Gastrocnemius medialis (tissue), 4 donors: ENCODE measurements at regions of chr11 and their contacts with region 1.

Region 1: GRCh38 chr11:57761301-57762234 is at the start of gene CTNND1:
- DNase-seq: peak; percentile 92 to 95
- ATAC-seq: peak; percentile 100
- H3K4me3 ChIP-seq: peak within 1 kb of the TSS; percentile 66 to 83 (median 78)
- H3K27ac ChIP-seq: peak within 1 kb of the TSS; percentile 90 to 97 (median 93)
- H3K4me1 ChIP-seq: peaks cover 34 to 37% of the 10 kb centered on the region in 2 donors
- H3K27me3 ChIP-seq: no peaks in the 10 kb centered on the region
- CTCF ChIP-seq: no peak
- POLR2A ChIP-seq: peak; percentile 67 to 80
- total RNA-seq, gene CTNND1: 19.7 to 29.8 (median 24.5) TPM

Region 2: DNA sequence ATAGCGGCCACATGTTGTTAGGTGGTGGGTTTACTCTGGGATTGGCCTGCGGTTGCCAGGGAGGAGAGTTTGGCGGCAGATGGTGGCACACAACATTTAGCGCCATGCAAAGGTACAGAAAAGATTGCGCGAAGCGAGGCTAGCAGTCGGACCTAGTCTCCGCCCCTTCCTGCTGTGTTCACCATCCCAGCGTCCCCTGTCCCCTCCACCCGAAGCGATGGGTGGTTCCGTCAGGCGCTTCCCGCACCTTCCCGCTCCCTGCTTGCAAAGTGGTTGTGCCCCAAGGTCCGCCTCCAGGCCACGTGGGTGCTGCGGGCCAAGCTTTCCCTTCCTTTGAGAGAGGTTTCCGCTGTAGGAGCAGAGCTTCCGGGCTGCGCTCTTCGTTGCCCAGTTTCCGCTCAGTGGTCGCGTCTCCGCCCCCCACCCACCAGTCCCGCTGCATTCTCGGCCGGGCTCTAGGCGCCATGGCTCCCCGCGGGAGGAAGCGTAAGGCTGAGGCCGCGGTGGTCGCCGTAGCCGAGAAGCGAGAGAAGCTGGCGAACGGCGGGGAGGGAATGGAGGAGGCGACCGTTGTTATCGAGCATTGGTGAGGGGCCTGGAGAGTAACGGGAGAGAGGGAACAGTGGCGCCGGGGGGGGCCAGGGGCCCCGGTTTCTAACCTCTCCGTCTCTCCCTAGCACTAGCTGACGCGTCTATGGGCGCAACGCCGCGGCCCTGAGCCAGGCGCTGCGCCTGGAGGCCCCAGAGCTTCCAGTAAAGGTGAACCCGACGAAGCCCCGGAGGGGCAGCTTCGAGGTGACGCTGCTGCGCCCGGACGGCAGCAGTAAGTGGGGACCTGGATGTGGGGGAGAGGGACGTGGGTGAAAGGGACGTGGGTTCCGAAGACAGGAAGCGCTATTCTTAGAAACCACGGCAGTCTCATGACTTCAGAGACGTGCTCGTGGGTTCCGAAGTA is 20.2 kb before region 1 on chr11 and contains the start of gene SELENOH:
- in situ Hi-C with region 1: no loop called
- intact Hi-C with region 1: loop called (anchors 1 kb)
- DNase-seq: peak; percentile 95 to 96
- ATAC-seq: peak; percentile 95 to 97
- H3K4me3 ChIP-seq: peak within 1 kb of the TSS; percentile 77 to 100 (median 90)
- H3K27ac ChIP-seq: peak within 1 kb of the TSS; percentile 94 to 99 (median 98)
- H3K4me1 ChIP-seq: peaks cover 15 to 17% of the 10 kb centered on the region in 2 donors
- H3K27me3 ChIP-seq: no peaks in the 10 kb centered on the region
- CTCF ChIP-seq: no peak
- POLR2A ChIP-seq: peak; percentile 84
- total RNA-seq, gene SELENOH: 94.7 to 145 (median 132) TPM

Region 3: DNA sequence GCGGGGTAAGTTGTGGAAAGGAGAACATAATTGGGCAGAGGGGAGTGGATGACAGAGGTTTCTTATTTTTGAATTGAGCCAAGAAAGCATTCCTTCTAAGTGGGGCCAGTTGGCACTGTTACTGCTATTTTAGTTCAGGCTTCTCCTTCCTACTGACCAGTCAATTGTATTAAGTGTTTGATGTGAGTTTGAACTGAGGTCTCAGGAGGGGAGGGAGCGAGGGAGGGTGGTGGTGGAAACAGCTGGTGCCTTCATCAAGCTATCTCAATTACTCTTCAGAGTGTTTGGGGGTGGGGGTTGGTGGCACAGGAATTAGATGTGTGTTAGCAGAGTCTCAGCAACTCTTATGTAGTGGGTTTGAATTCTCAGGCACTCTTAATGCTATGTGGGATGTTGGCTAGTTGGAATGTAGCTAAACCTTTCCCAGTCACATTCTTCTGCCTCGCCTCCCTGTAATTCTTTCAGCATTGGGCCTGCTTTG is 14.5 kb after region 1 on chr11:
- in situ Hi-C with region 1: no loop called
- intact Hi-C with region 1: loop called (anchors 2 kb)
- DNase-seq: no peak
- ATAC-seq: no peak
- H3K4me3 ChIP-seq: peak overlapping the region; percentile 6 to 36 (median 20)
- H3K27ac ChIP-seq: peak overlapping the region; percentile 50 to 83 (median 72)
- H3K4me1 ChIP-seq: peaks cover 74 to 90% of the 10 kb centered on the region in 2 donors
- H3K27me3 ChIP-seq: no peaks in the 10 kb centered on the region
- CTCF ChIP-seq: no peak
- POLR2A ChIP-seq: no peak

Region 4: GRCh38 chr11:58000699-58001098 is 239.1 kb after region 1 on chr11:
- in situ Hi-C with region 1: no loop called
- intact Hi-C with region 1: no loop called
- DNase-seq: no peak
- ATAC-seq: no peak
- H3K4me3 ChIP-seq: no peak overlapping the region
- H3K27ac ChIP-seq: no peak overlapping the region
- H3K4me1 ChIP-seq: no peaks in the 10 kb centered on the region
- H3K27me3 ChIP-seq: no peaks in the 10 kb centered on the region
- CTCF ChIP-seq: no peak
- POLR2A ChIP-seq: no peak